CD4-positive, alpha-beta T cell (primary cell): ENCODE measurements at regions of chr11 and their contacts with region 1.

Region 1: GRCh38 chr11:61201476-61201875 is 1.8 kb upstream of the PGA3 start:
- DNase-seq: no peak
- ATAC-seq: no peak
- H3K4me3 ChIP-seq: no peak overlapping the region
- H3K4me3 Mint-ChIP-seq: no peak overlapping the region
- H3K27ac ChIP-seq: no peak overlapping the region
- H3K27ac Mint-ChIP-seq: no peak overlapping the region
- H3K4me1 ChIP-seq: no peaks in the 10 kb centered on the region
- H3K4me1 Mint-ChIP-seq: no peaks in the 10 kb centered on the region
- H3K27me3 ChIP-seq: no peaks in the 10 kb centered on the region
- H3K27me3 Mint-ChIP-seq: peaks cover 11% of the 10 kb centered on the region
- CTCF ChIP-seq: no peak

Region 2: GRCh38 chr11:61270354-61271076 is 69.0 kb after region 1 on chr11:
- CTCF ChIA-PET with region 1: no interaction called
- POLR2A ChIA-PET with region 1: no interaction called
- intact Hi-C with region 1: loop called in 1 of 2 experiments (anchors 10 kb)
- DNase-seq: no peak
- ATAC-seq: no peak
- H3K4me3 ChIP-seq: no peak overlapping the region
- H3K4me3 Mint-ChIP-seq: no peak overlapping the region
- H3K27ac ChIP-seq: no peak overlapping the region
- H3K27ac Mint-ChIP-seq: no peak overlapping the region
- H3K4me1 ChIP-seq: no peaks in the 10 kb centered on the region
- H3K4me1 Mint-ChIP-seq: no peaks in the 10 kb centered on the region
- H3K27me3 ChIP-seq: no peaks in the 10 kb centered on the region
- H3K27me3 Mint-ChIP-seq: no peaks in the 10 kb centered on the region
- CTCF ChIP-seq: no peak

Region 3: DNA sequence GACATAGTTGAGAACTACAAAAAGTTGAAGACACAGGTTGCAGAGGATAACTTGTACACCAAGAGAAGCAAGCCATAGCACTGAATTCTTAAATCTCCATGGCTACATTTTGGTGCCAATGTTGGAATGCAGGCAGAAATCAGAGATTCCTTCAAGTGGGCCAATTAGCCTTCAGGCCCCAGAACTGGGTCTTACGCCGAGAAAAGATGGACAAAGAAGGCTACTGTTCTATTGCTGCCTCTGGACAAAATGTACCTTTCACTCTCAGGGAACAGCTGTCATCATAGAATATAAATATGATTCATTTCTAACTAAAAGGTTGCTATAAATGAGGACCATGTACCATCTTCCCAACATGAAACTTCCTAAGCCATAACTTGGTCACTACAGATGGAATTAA is 204.6 kb after region 1 on chr11:
- CTCF ChIA-PET with region 1: no interaction called
- POLR2A ChIA-PET with region 1: no interaction called
- intact Hi-C with region 1: no loop called
- DNase-seq: no peak
- ATAC-seq: no peak
- H3K4me3 ChIP-seq: no peak overlapping the region
- H3K4me3 Mint-ChIP-seq: no peak overlapping the region
- H3K27ac ChIP-seq: no peak overlapping the region
- H3K27ac Mint-ChIP-seq: no peak overlapping the region
- H3K4me1 ChIP-seq: no peaks in the 10 kb centered on the region
- H3K4me1 Mint-ChIP-seq: no peaks in the 10 kb centered on the region
- H3K27me3 ChIP-seq: no peaks in the 10 kb centered on the region
- H3K27me3 Mint-ChIP-seq: no peaks in the 10 kb centered on the region
- CTCF ChIP-seq: no peak

Region 4: GRCh38 chr11:61460474-61460881 is 259.0 kb after region 1 on chr11:
- CTCF ChIA-PET with region 1: no interaction called
- POLR2A ChIA-PET with region 1: no interaction called
- intact Hi-C with region 1: no loop called
- DNase-seq: no peak
- ATAC-seq: no peak
- H3K4me3 ChIP-seq: no peak overlapping the region
- H3K4me3 Mint-ChIP-seq: no peak overlapping the region
- H3K27ac ChIP-seq: no peak overlapping the region
- H3K27ac Mint-ChIP-seq: no peak overlapping the region
- H3K4me1 ChIP-seq: no peaks in the 10 kb centered on the region
- H3K4me1 Mint-ChIP-seq: no peaks in the 10 kb centered on the region
- H3K27me3 ChIP-seq: no peaks in the 10 kb centered on the region
- H3K27me3 Mint-ChIP-seq: no peaks in the 10 kb centered on the region
- CTCF ChIP-seq: no peak